ENCODE measurements at regions of chr3 and their contacts with region 1.

Region 1: DNA sequence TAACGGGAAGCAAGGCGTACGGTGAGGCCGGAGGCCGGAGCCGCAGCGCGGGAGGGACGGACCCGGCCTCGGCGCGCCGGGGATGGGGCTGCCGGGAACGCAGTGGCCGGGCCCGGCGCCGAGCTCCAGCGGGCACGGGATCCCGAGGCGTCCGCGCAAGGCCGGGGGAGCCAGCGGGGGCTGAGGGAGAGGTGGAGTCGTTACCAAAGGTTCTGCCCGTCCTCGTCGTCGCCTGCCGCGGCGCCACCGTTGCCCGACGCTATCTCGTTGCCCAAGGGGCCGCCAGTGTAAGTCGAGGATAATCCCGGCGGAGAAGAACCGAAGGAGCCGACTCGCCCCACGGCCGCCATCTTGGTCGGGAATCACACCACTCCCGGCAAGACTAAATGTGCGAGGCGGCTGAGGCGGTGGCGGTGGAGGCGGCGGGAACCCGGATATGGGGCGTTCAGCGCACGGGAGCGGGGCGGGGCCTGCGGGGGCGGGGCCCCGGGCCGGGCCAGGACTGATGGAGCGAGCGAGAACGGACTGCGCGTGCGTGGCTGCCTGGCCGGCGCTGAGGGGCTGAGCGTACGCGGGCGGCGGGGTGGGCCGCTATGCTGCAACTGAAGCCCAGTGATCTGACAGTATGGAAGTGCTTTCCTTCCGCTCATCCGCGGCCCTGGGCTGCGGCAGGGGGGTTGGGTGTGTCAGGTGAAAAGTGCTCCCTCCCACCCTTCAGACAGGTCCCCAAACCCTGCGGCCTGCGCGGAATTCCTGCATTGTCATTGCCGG is at the start of gene DYNC1LI1:
- DNase-seq: peak; percentile 87
- ATAC-seq: peak; percentile 96
- H3K4me3 ChIP-seq: peak within 1 kb of the TSS; percentile 90
- H3K27ac ChIP-seq: peak within 1 kb of the TSS; percentile 98
- H3K4me1 ChIP-seq: peaks cover 1% of the 10 kb centered on the region
- H3K27me3 ChIP-seq: no peaks in the 10 kb centered on the region
- CTCF ChIP-seq: no peak
- POLR2A ChIP-seq: peak; percentile 93
- RAD21 ChIP-seq: no peak
- total RNA-seq, gene DYNC1LI1: 30.8 and 45.0 TPM in 2 replicates

Region 2: GRCh38 chr3:32522682-32523081 is 47.9 kb before region 1 on chr3:
- CTCF ChIA-PET with region 1: no interaction called
- POLR2A ChIA-PET with region 1: interaction called, 15 read pairs
- dilution Hi-C with region 1: no loop called
- in situ Hi-C with region 1: no loop called
- intact Hi-C with region 1: no loop called
- DNase-seq: no peak
- ATAC-seq: no peak
- H3K4me3 ChIP-seq: no peak overlapping the region
- H3K27ac ChIP-seq: no peak overlapping the region
- H3K4me1 ChIP-seq: no peaks in the 10 kb centered on the region
- H3K27me3 ChIP-seq: no peaks in the 10 kb centered on the region
- CTCF ChIP-seq: no peak
- POLR2A ChIP-seq: no peak
- RAD21 ChIP-seq: no peak

Measured in IMR-90 (cell line).